Activated B cell treated with CpG ODN at 0.5 μM for 24 hours (primary cell): ENCODE measurements at regions of chr6 and their contacts with region 1.

Region 1: GRCh38 chr6:163413345-163414116 is 987 bp upstream of the QKI start:
- DNase-seq: peak; percentile 98
- ATAC-seq: peak; percentile 70
- H3K4me3 Mint-ChIP-seq: peak overlapping the region; percentile 88
- H3K27ac Mint-ChIP-seq: peak overlapping the region; percentile 91
- H3K4me1 Mint-ChIP-seq: peaks cover 37% of the 10 kb centered on the region
- H3K27me3 Mint-ChIP-seq: no peaks in the 10 kb centered on the region
- CTCF ChIP-seq: no peak

Region 2: DNA sequence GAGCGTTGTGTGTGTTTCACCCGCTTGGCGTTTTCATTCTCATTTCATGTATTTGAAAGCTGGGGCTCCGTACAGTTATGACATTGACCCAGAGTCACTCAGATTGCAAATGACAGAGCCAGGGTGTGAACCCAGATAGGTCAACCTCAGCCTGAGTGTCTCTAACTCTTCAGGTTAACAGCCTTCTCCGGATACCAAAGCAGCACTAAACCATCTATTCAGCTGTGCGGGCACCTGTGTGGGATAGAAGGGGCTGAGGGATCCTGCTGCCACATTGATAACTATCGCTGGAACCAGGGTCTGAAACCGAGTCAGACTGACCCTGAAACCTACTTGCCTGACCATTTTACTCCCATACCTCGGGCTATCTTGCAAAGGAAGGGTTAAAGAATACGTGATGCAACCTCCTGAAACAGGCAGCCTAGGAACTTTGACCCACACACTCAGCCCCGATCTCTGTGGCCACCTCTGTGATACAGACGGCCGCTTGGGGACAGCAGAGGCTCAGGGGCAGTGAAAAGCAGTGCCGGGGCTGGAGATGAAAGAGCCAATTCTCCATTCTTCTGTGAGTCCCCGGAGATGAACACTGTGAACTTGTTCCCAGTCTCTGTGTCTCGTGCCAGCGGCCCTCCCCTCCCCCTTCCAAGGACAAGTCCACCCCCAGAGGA is 232.5 kb before region 1 on chr6:
- CTCF ChIA-PET with region 1: no interaction called
- POLR2A ChIA-PET with region 1: no interaction called
- intact Hi-C with region 1: loop called (anchors 5 kb)
- DNase-seq: no peak
- ATAC-seq: no peak
- H3K4me3 Mint-ChIP-seq: no peak overlapping the region
- H3K27ac Mint-ChIP-seq: no peak overlapping the region
- H3K4me1 Mint-ChIP-seq: no peaks in the 10 kb centered on the region
- H3K27me3 Mint-ChIP-seq: peaks cover 3% of the 10 kb centered on the region
- CTCF ChIP-seq: no peak

Region 3: DNA sequence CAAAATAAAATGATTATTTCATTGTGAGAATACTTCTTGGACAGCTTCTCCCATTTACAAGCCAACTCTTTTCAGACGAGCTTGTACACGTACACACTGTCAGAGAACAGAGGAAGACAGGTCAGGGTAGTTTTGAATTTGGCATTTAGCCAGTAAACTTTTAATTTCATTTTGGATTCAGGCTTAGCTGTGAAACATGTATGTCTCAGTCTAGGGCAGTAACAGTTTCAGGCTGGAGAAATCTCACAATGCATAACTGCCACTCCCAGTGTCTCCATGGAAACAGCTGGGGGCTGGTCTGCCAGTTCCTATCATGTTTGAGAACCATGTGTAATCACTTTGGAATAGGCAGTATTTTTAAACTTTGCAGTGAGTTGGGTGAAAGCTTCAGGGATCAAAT is 21.0 kb before region 1 on chr6:
- CTCF ChIA-PET with region 1: no interaction called
- POLR2A ChIA-PET with region 1: no interaction called
- intact Hi-C with region 1: no loop called
- DNase-seq: no peak
- ATAC-seq: no peak
- H3K4me3 Mint-ChIP-seq: no peak overlapping the region
- H3K27ac Mint-ChIP-seq: no peak overlapping the region
- H3K4me1 Mint-ChIP-seq: peaks cover 7% of the 10 kb centered on the region
- H3K27me3 Mint-ChIP-seq: peaks cover 29% of the 10 kb centered on the region
- CTCF ChIP-seq: no peak

Region 4: DNA sequence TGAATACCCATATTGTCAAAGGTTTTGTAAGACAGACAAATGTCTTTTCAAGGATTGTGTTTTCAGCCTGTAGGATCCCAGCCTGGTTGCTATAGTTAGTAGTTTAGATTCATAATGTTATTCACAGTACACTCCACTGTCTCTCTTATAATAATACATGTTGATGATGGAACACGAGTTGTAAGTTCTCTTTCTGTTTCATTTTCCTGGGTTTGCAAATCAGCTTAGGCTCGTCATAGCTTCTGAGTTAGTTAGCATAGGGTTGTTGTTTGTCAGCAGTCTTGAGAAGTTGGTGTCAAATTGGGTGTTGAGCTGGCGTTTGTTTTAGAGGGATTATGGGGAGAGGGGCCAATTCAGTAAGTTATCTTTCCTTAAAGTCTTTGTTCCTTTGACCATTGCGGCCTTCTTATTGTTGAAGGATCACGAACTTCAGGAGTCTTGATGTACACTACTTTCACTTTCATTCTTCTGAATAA is 46.8 kb after region 1 on chr6:
- CTCF ChIA-PET with region 1: no interaction called
- POLR2A ChIA-PET with region 1: interaction called, 5 read pairs
- intact Hi-C with region 1: loop called (anchors 1 kb)
- DNase-seq: no peak
- ATAC-seq: peak; percentile 87
- H3K4me3 Mint-ChIP-seq: peak overlapping the region; percentile 89
- H3K27ac Mint-ChIP-seq: peak overlapping the region; percentile 89
- H3K4me1 Mint-ChIP-seq: peaks cover 58% of the 10 kb centered on the region
- H3K27me3 Mint-ChIP-seq: no peaks in the 10 kb centered on the region
- CTCF ChIP-seq: no peak

Region 5: GRCh38 chr6:163667372-163668060 is 254.0 kb after region 1 on chr6:
- CTCF ChIA-PET with region 1: no interaction called
- POLR2A ChIA-PET with region 1: interaction called, 8 read pairs
- intact Hi-C with region 1: loop called (anchors 1 kb)
- DNase-seq: no peak
- ATAC-seq: peak; percentile 89
- H3K4me3 Mint-ChIP-seq: peak overlapping the region; percentile 73
- H3K27ac Mint-ChIP-seq: peak overlapping the region; percentile 92
- H3K4me1 Mint-ChIP-seq: peaks cover 27% of the 10 kb centered on the region
- H3K27me3 Mint-ChIP-seq: no peaks in the 10 kb centered on the region
- CTCF ChIP-seq: no peak

Region 6: DNA sequence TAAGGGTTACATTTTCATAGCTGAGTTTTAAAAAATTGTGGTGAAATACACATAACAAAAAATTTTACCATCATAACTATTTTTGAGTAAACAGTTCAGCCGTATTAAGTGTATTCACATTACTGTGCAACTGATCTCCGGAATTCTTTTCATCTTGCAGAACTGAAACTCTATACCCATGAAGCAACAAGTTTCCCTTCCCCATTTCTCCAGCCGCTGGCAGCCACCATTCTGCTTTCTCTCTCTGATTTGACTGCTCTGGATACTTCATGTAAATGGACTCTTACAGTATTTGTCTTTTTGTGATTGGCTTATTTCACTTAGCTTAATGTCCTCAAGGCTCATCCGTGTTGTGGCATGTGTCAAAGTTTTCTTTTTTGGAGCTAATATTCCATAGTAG is 342.5 kb after region 1 on chr6:
- CTCF ChIA-PET with region 1: no interaction called
- POLR2A ChIA-PET with region 1: interaction called, 3 read pairs
- intact Hi-C with region 1: loop called (anchors 1 kb)
- DNase-seq: peak; percentile 55
- ATAC-seq: peak; percentile 96
- H3K4me3 Mint-ChIP-seq: peak overlapping the region; percentile 39
- H3K27ac Mint-ChIP-seq: peak overlapping the region; percentile 11
- H3K4me1 Mint-ChIP-seq: peaks cover 40% of the 10 kb centered on the region
- H3K27me3 Mint-ChIP-seq: peaks cover 5% of the 10 kb centered on the region
- CTCF ChIP-seq: no peak

Region 7: DNA sequence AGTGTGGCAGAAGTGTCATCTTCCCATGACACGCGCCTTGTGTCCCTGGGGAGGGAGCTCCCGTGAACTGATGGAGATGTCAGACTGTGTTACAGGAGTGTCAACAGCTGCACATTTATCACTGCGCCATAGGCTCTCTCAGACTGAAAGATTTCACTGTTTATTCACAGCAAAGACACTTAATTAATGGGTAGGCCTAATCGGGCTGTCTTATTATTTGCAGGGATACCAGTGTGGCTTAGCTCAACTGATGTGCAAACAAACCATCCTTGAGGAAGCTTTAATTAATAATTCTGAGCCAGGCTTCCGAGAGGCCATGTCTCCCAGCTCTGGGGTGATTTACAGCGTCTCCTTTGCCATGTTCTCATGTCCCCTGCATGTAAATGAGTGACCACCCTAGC is 771.9 kb after region 1 on chr6:
- CTCF ChIA-PET with region 1: no interaction called
- POLR2A ChIA-PET with region 1: no interaction called
- intact Hi-C with region 1: no loop called
- DNase-seq: no peak
- ATAC-seq: no peak
- H3K4me3 Mint-ChIP-seq: no peak overlapping the region
- H3K27ac Mint-ChIP-seq: no peak overlapping the region
- H3K4me1 Mint-ChIP-seq: no peaks in the 10 kb centered on the region
- H3K27me3 Mint-ChIP-seq: no peaks in the 10 kb centered on the region
- CTCF ChIP-seq: no peak